Activated naive CD4-positive, alpha-beta T cell treated with anti-CD3 and anti-CD28 coated beads for 36 hours (primary cell): ENCODE measurements at regions of chr1 and their contacts with region 1.

Region 1: GRCh38 chr1:89358287-89358893 is 5.5 kb upstream of the GBP6 start:
- DNase-seq: peak; percentile 91
- H3K4me3 Mint-ChIP-seq: peak overlapping the region; percentile 33
- H3K27ac Mint-ChIP-seq: peak overlapping the region; percentile 65
- H3K4me1 Mint-ChIP-seq: peaks cover 33% of the 10 kb centered on the region
- H3K27me3 Mint-ChIP-seq: no peaks in the 10 kb centered on the region

Region 2: GRCh38 chr1:88935522-88936222 is 422.7 kb before region 1 on chr1:
- CTCF ChIA-PET with region 1: no interaction called
- intact Hi-C with region 1: loop called (anchors 2 kb)
- DNase-seq: peak; percentile 9
- H3K4me3 Mint-ChIP-seq: no peak overlapping the region
- H3K27ac Mint-ChIP-seq: no peak overlapping the region
- H3K4me1 Mint-ChIP-seq: no peaks in the 10 kb centered on the region
- H3K27me3 Mint-ChIP-seq: no peaks in the 10 kb centered on the region

Region 3: GRCh38 chr1:88983791-88984559 is 374.4 kb before region 1 on chr1:
- CTCF ChIA-PET with region 1: interaction called, 12 read pairs
- intact Hi-C with region 1: no loop called
- DNase-seq: peak; percentile 42
- H3K4me3 Mint-ChIP-seq: peak overlapping the region; percentile 27
- H3K27ac Mint-ChIP-seq: peak overlapping the region; percentile 47
- H3K4me1 Mint-ChIP-seq: peaks cover 80% of the 10 kb centered on the region
- H3K27me3 Mint-ChIP-seq: no peaks in the 10 kb centered on the region

Region 4: GRCh38 chr1:89085781-89086180 is 272.6 kb before region 1 on chr1:
- CTCF ChIA-PET with region 1: interaction called, 13 read pairs
- intact Hi-C with region 1: loop called (anchors 1 kb)
- DNase-seq: peak; percentile 70
- H3K4me3 Mint-ChIP-seq: no peak overlapping the region
- H3K27ac Mint-ChIP-seq: no peak overlapping the region
- H3K4me1 Mint-ChIP-seq: no peaks in the 10 kb centered on the region
- H3K27me3 Mint-ChIP-seq: no peaks in the 10 kb centered on the region

Region 5: GRCh38 chr1:89310505-89310904 is 47.9 kb before region 1 on chr1:
- CTCF ChIA-PET with region 1: interaction called, 12 read pairs
- intact Hi-C with region 1: loop called (anchors 5 kb)
- DNase-seq: no peak
- H3K4me3 Mint-ChIP-seq: no peak overlapping the region
- H3K27ac Mint-ChIP-seq: peak overlapping the region; percentile 86
- H3K4me1 Mint-ChIP-seq: peaks cover 49% of the 10 kb centered on the region
- H3K27me3 Mint-ChIP-seq: no peaks in the 10 kb centered on the region